WTC11 (cell line): ENCODE measurements at regions of chr18 and their contacts with region 1.

Region 1: GRCh38 chr18:76274468-76275289 is 220.4 kb downstream of the ZNF516 start:
- DNase-seq: peak; percentile 58
- ATAC-seq: peak; percentile 95
- H3K4me3 Mint-ChIP-seq: no peak overlapping the region
- H3K27ac Mint-ChIP-seq: no peak overlapping the region; the same call in 1 of the 2 replicates
- H3K4me1 Mint-ChIP-seq: no peaks in the 10 kb centered on the region
- H3K27me3 Mint-ChIP-seq: no peaks in the 10 kb centered on the region; the same call in 1 of the 2 replicates
- CTCF ChIP-seq: no peak

Region 2: GRCh38 chr18:76098674-76099411 is 175.8 kb before region 1 on chr18:
- CTCF ChIA-PET with region 1: no interaction called
- POLR2A ChIA-PET with region 1: no interaction called
- DNase-seq: no peak
- ATAC-seq: no peak; the same call in 1 of the 2 replicates
- H3K4me3 Mint-ChIP-seq: no peak overlapping the region
- H3K27ac Mint-ChIP-seq: no peak overlapping the region
- H3K4me1 Mint-ChIP-seq: peaks cover 8% of the 10 kb centered on the region
- H3K27me3 Mint-ChIP-seq: no peaks in the 10 kb centered on the region
- CTCF ChIP-seq: no peak

Region 3: GRCh38 chr18:76259096-76259495 is 15.6 kb before region 1 on chr18:
- CTCF ChIA-PET with region 1: interaction called, 13 read pairs
- POLR2A ChIA-PET with region 1: no interaction called
- DNase-seq: no peak
- ATAC-seq: peak; percentile 74
- H3K4me3 Mint-ChIP-seq: no peak overlapping the region
- H3K27ac Mint-ChIP-seq: no peak overlapping the region
- H3K4me1 Mint-ChIP-seq: peaks cover 59% of the 10 kb centered on the region
- H3K27me3 Mint-ChIP-seq: no peaks in the 10 kb centered on the region
- CTCF ChIP-seq: no peak